Endothelial cell of umbilical vein (primary cell): ENCODE measurements at regions of chr5 and their contacts with region 1.

Region 1: GRCh38 chr5:132215329-132215728 is 12.3 kb downstream of the P4HA2 start:
- DNase-seq: peak; percentile 80
- H3K4me3 ChIP-seq: no peak overlapping the region
- H3K27ac ChIP-seq: peak overlapping the region; percentile 52
- H3K4me1 ChIP-seq: peaks cover 5% of the 10 kb centered on the region
- H3K27me3 ChIP-seq: no peaks in the 10 kb centered on the region
- CTCF ChIP-seq: no peak
- POLR2A ChIP-seq: no peak

Region 2: GRCh38 chr5:132227485-132228240 is 12.3 kb after region 1 on chr5 and contains the start of gene P4HA2:
- CTCF ChIA-PET with region 1: interaction called, 3 read pairs
- POLR2A ChIA-PET with region 1: interaction called, 3 read pairs
- dilution Hi-C with region 1: no loop called
- intact Hi-C with region 1: loop called (anchors 1 kb)
- DNase-seq: peak; percentile 71
- H3K4me3 ChIP-seq: peak within 1 kb of the TSS; percentile 44 to 61 (median 46)
- H3K27ac ChIP-seq: peak within 1 kb of the TSS; percentile 28
- H3K4me1 ChIP-seq: no peaks in the 10 kb centered on the region
- H3K27me3 ChIP-seq: peaks cover 0 to 1% of the 10 kb centered on the region in 2 experiments
- CTCF ChIP-seq: no peak
- POLR2A ChIP-seq: peak; percentile 56
- total RNA-seq, gene P4HA2: 37.4 and 37.6 TPM in 2 replicates

Region 3: DNA sequence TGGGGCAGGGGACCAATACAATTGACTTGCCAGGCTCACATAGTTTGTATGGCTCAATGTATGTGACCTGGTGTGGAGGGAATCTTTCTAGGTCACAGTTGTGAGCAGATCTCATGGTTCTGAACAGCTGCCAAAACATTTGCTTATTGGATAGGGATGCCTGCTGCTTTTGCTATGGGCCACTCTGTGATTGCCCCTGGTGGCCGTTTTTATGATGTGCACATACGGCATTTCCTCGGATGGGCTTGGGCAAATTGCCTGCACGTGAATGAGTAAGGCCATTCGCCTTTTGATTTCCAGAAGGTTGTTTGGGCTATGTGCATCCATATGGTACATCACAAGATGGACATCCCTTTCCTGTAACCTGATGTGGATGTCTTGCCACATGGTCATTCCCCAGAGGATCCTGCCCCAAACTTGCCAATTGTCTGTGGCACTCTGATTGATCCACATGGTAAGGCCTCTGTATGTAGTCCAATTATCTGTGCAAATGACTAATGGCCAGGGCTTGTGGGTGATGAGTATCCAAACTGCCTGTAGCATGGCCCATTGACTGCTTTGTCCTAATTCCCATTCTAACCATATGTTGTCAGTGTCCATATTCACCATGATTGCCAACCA is 68.2 kb after region 1 on chr5:
- CTCF ChIA-PET with region 1: no interaction called
- POLR2A ChIA-PET with region 1: no interaction called
- dilution Hi-C with region 1: no loop called
- intact Hi-C with region 1: no loop called
- DNase-seq: peak; percentile 62
- H3K4me3 ChIP-seq: no peak overlapping the region
- H3K27ac ChIP-seq: no peak overlapping the region
- H3K4me1 ChIP-seq: no peaks in the 10 kb centered on the region
- H3K27me3 ChIP-seq: peaks cover 0 to 2% of the 10 kb centered on the region in 2 experiments
- CTCF ChIP-seq: peak; percentile 69 to 71
- POLR2A ChIP-seq: no peak